Right ventricle myocardium superior (tissue), 1 donor: ENCODE measurements at regions of chr22 and their contacts with region 1.

Region 1: GRCh38 chr22:38051900-38052862 is 5.0 kb upstream of the PICK1 start:
- DNase-seq: peak; percentile 86
- ATAC-seq: peak; percentile 86

Region 2: GRCh38 chr22:37824674-37825641 is 227.2 kb before region 1 on chr22:
- intact Hi-C with region 1: no loop called
- DNase-seq: no peak
- ATAC-seq: no peak

Region 3: DNA sequence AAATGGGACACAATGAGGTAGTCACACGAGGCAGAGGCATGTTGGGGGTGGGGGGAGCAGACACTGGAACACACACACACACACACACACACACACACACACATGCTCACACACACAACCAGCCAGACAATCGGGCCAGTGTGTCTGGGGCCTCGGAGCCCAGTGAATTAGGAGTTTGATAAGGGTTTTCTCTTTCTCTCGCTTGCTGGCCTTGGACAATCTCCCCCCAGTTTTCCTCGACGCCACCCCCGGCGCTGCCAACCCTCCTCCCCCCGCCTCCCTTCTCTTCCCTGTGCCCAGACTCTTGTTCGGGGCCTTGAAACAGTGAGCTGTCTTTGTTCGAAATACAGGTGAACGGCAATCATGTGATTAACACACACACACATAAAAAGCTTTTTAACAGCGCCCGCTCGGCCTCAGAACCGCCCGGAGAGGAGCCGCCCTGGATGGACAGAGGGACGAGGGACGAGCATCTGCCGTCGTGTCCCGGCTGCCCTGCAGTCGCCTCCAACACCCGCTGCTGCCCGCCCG is 66.4 kb before region 1 on chr22:
- intact Hi-C with region 1: no loop called
- DNase-seq: no peak
- ATAC-seq: no peak

Region 4: DNA sequence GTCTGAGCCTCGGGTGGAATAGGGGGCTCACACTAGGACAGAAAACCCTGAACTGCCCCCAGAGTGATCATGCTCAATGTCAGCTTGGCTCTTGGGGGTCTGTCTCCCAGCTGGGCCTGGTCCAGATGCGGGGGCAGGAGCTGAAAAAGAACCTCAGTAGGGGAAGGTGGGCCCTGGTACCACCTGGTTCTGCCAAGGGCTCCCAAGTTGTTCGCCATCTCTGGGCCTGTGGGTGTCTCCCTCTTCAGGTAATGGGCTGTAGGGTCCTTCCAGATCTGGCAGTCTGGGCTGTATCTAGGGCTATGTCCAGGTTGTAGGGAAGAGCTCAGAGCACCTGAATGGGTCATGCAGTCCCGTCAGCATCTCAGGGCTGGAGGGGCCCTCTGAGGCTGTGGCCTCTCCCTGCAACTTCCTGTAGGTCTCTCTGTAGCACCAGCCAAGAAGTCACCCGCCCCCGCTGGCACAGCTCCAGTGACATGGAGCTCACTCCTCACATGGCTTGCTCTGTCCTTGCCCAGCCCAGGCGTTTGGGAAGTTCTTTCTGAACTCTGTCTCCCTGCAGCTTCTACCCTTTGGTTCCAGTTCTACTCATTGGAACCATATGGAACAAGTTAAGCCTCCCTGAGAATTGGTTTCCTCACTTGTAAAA is 34.8 kb before region 1 on chr22:
- intact Hi-C with region 1: no loop called
- DNase-seq: peak; percentile 91
- ATAC-seq: peak; percentile 90

Region 5: GRCh38 chr22:38353142-38353629 is 301.0 kb after region 1 on chr22:
- intact Hi-C with region 1: loop called (anchors 10 kb)
- DNase-seq: peak; percentile 85
- ATAC-seq: peak; percentile 92